ENCODE measurements at regions of chr4 and their contacts with region 1.

Region 1: DNA sequence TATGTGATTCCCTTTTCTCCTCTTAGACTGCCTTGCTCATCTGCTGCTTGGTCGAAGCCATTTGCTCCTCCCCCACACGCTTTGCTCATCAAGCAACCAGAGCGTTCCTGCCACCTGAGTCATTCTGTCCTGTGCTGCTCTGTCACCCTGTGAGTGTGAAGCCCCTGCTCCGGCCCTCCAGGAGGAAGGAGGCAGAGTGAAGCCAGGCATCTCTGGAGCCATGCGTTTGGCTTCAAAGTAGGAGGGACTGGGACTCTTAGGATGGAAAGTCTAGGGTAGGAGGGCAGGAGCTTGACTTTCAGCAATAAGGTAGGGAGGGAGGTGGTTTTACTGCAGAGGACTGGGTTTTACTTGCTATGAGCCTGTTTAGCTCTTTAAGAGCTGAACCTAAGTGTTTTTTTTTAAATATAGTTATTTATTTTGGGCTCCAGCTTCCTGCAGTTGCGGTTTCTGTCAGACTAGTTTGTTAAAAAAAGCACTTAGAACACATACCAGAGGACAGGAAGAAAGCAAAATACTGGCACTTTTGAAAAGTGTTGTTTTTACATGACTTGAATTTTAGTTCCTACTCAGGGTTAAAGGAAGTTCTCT is 63.6 kb downstream of the SPINK2 start:
- DNase-seq: peak; percentile 78
- ATAC-seq: peak; percentile 87
- H3K4me3 ChIP-seq: peak overlapping the region; percentile 22 to 60 (median 34)
- H3K4me3 Mint-ChIP-seq: peak overlapping the region; percentile 84
- H3K27ac ChIP-seq: peak overlapping the region; percentile 68 to 77
- H3K27ac Mint-ChIP-seq: peak overlapping the region; percentile 95
- H3K4me1 ChIP-seq: peaks cover 39 to 53% of the 10 kb centered on the region in 2 donors
- H3K4me1 Mint-ChIP-seq: peaks cover 60% of the 10 kb centered on the region
- H3K27me3 ChIP-seq: no peaks in the 10 kb centered on the region
- H3K27me3 Mint-ChIP-seq: no peaks in the 10 kb centered on the region
- CTCF ChIP-seq: no peak

Region 2: DNA sequence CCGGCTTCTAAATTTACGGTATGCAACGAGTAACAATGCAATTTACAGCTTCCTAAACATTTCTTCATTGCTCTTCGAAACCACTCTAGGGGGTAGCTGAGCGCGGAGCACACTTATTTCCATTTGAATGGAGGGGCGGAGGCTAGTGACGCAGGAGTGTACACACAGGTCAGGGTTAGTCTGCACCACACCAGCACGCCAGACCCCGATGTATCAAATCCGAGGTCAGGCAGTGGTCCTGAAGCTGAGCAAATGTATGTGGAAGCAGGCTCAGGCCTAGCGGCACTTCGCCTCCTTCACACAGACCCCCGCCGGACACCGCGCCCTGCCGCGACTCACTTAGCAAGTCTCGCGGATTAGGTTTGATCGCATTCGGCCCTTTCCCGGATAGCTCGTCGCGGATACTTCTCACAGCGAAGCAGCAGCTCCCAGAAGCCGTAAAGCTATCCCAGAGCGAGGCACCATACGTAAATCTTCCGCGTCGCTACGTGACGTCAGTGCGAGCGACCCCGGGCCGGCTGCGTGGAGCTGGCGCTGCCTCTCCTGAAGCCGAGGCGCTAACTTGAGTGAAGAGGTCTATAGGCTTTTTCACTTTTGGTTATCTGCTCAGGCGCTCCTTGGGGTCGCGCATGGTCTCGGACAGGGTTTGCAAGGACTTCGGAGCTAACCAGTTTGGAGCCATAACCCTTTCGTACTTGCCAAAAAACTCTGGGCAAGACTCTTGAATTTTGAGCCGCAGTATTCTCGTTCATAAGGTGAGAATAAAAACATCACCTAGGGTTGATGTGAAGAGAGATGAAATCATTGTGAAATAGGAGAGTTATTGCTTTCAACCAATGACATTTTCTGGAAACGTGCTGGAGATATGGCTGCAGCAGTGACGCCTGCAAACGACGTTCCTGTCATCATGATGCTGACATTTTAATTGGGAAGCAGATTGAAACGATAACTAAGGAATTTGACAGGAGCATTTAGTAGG is 370.6 kb before region 1 on chr4 and contains the start of gene AASDH:
- CTCF ChIA-PET with region 1: no interaction called
- POLR2A ChIA-PET with region 1: no interaction called
- intact Hi-C with region 1: no loop called
- DNase-seq: peak; percentile 97
- ATAC-seq: peak; percentile 94
- H3K4me3 ChIP-seq: peak within 1 kb of the TSS; percentile 57 to 97 (median 81)
- H3K4me3 Mint-ChIP-seq: peak within 1 kb of the TSS; percentile 88
- H3K27ac ChIP-seq: peak within 1 kb of the TSS; percentile 86 to 89
- H3K27ac Mint-ChIP-seq: peak within 1 kb of the TSS; percentile 99
- H3K4me1 ChIP-seq: peaks cover 14% of the 10 kb centered on the region in 2 donors
- H3K4me1 Mint-ChIP-seq: peaks cover 30% of the 10 kb centered on the region
- H3K27me3 ChIP-seq: no peaks in the 10 kb centered on the region
- H3K27me3 Mint-ChIP-seq: no peaks in the 10 kb centered on the region
- CTCF ChIP-seq: no peak
- total RNA-seq, gene AASDH: 15.2 and 17.2 TPM in 2 replicates

Region 3: GRCh38 chr4:56655209-56655626 is 102.7 kb before region 1 on chr4:
- CTCF ChIA-PET with region 1: no interaction called
- POLR2A ChIA-PET with region 1: no interaction called
- intact Hi-C with region 1: loop called (anchors 2 kb)
- DNase-seq: peak; percentile 61
- ATAC-seq: peak; percentile 29
- H3K4me3 ChIP-seq: peak overlapping the region in 4 of 5 experiments; percentile 59 to 72 (median 68)
- H3K4me3 Mint-ChIP-seq: peak overlapping the region; percentile 96
- H3K27ac ChIP-seq: no peak overlapping the region
- H3K27ac Mint-ChIP-seq: peak overlapping the region; percentile 73
- H3K4me1 ChIP-seq: peaks cover 45 to 52% of the 10 kb centered on the region in 2 donors
- H3K4me1 Mint-ChIP-seq: peaks cover 63% of the 10 kb centered on the region
- H3K27me3 ChIP-seq: peaks cover 0 to 20% (median 2%) of the 10 kb centered on the region in 4 experiments
- H3K27me3 Mint-ChIP-seq: peaks cover 7% of the 10 kb centered on the region
- CTCF ChIP-seq: no peak

Region 4: DNA sequence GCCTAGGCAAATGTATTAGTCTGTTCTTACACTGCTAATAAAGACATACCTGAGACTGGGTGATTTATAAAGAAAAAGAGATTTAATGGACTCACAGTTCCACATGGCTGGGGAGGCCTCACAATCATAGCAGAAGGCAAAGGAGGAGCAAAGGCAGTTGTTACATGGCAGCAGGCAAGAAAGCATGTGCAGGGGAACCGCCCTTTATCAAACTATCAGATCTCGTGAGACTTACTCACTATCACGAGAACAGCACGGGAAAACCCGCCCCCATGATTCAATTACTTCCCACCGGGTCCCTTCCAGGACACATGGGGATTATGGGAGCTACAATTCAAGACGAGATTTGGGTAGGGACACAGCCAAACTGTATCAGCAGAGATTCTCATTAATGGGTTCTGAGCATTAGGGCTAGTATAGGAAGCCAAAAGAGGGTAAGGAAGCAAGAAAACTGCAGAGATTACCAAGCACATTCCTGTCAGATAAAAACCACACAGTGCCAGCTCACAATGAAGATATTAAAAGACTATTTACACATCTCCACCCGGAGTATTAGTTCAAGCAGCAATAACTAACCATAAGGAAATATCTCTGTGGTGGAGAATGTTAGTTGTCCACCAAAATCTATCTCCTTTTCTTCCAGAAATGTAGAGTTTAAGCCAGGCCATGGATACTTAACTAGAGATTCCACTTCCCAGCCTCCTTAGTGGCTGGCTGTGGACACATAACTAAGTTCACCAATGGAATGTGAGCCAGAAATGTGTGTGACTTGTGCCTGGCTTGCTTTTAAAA is 15.6 kb before region 1 on chr4:
- CTCF ChIA-PET with region 1: no interaction called
- POLR2A ChIA-PET with region 1: no interaction called
- intact Hi-C with region 1: no loop called
- DNase-seq: no peak
- ATAC-seq: no peak
- H3K4me3 ChIP-seq: no peak overlapping the region
- H3K4me3 Mint-ChIP-seq: no peak overlapping the region
- H3K27ac ChIP-seq: no peak overlapping the region
- H3K27ac Mint-ChIP-seq: no peak overlapping the region
- H3K4me1 ChIP-seq: peaks cover 5 to 8% of the 10 kb centered on the region in 2 donors
- H3K4me1 Mint-ChIP-seq: peaks cover 15% of the 10 kb centered on the region
- H3K27me3 ChIP-seq: no peaks in the 10 kb centered on the region
- H3K27me3 Mint-ChIP-seq: no peaks in the 10 kb centered on the region
- CTCF ChIP-seq: no peak